Activated CD8-positive, alpha-beta T cell treated with anti-CD3 and anti-CD28 coated beads for 36 hours (primary cell): ENCODE measurements at regions of chr15 and their contacts with region 1.

Region 1: GRCh38 chr15:101014921-101015841 is 96.0 kb downstream of the LRRK1 start:
- DNase-seq: peak; percentile 79
- ATAC-seq: peak; percentile 66
- H3K4me3 Mint-ChIP-seq: no peak overlapping the region
- H3K27ac Mint-ChIP-seq: no peak overlapping the region
- H3K4me1 Mint-ChIP-seq: no peaks in the 10 kb centered on the region
- H3K27me3 Mint-ChIP-seq: peaks cover 2% of the 10 kb centered on the region
- CTCF ChIP-seq: peak; percentile 94

Region 2: GRCh38 chr15:101088788-101089583 is 73.8 kb after region 1 on chr15:
- CTCF ChIA-PET with region 1: interaction called, 16 read pairs
- POLR2A ChIA-PET with region 1: no interaction called
- intact Hi-C with region 1: no loop called
- DNase-seq: peak; percentile 83
- ATAC-seq: peak; percentile 97
- H3K4me3 Mint-ChIP-seq: no peak overlapping the region
- H3K27ac Mint-ChIP-seq: no peak overlapping the region
- H3K4me1 Mint-ChIP-seq: peaks cover 8% of the 10 kb centered on the region
- H3K27me3 Mint-ChIP-seq: no peaks in the 10 kb centered on the region
- CTCF ChIP-seq: peak; percentile 99

Region 3: DNA sequence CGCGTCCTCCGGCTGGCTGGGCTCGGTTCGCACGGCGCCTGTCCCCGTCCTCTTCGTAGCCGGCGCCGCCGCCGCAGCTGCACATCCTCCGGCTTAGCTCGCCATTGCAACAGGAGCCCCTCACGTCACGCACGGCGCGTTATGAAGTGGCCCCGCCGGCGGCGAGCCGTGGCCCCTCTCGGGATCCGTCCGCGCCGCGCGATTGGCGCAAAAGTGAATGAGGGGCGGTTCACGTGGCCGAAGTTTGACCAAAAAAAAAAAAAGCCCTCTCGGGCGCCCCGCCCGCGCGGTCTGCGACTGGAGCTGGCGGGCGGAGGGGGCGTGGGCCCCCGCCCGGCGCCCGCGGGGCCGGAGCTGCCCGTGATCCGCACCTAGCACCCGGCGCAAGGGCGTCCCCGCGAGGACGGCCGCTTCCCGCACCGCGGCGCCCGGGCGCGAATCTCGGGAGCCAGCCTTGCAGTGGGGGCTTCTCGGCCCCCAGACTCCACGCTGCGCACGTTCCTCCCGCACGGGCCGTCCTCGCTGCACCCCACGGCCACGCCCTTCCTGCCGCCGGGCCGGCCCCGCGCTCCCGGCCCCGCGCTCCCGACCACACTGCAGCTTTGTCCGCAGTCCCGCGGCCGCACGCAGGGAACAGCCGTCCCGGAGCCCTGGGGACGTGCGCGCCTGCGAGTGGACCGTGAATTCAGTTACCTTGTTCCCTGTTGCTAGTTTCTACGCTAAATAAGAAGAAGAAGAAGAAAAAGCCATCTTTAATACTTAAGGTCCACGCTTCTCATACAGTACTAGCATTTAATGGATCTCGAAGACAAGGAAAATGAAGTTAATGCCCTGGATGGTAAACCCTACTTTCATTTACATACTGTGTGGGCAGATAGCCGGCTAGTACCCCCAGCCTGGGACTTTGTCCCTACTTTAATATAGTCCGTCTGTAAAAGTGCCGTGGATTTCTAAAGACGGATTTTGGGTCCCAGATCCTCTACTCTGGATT is 236.9 kb after region 1 on chr15 and contains the start of gene CHSY1:
- CTCF ChIA-PET with region 1: interaction called, 85 read pairs
- POLR2A ChIA-PET with region 1: no interaction called
- intact Hi-C with region 1: loop called (anchors 2 kb)
- DNase-seq: peak; percentile 91
- ATAC-seq: peak; percentile 75
- H3K4me3 Mint-ChIP-seq: peak within 1 kb of the TSS; percentile 85
- H3K27ac Mint-ChIP-seq: peak within 1 kb of the TSS; percentile 87
- H3K4me1 Mint-ChIP-seq: peaks cover 59% of the 10 kb centered on the region
- H3K27me3 Mint-ChIP-seq: no peaks in the 10 kb centered on the region
- CTCF ChIP-seq: no peak
- total RNA-seq, gene CHSY1: 57.9 to 58.3 TPM

Region 4: GRCh38 chr15:101269479-101270223 is 254.5 kb after region 1 on chr15:
- CTCF ChIA-PET with region 1: interaction called, 16 read pairs
- POLR2A ChIA-PET with region 1: no interaction called
- intact Hi-C with region 1: no loop called
- DNase-seq: no peak
- ATAC-seq: no peak
- H3K4me3 Mint-ChIP-seq: no peak overlapping the region
- H3K27ac Mint-ChIP-seq: peak overlapping the region; percentile 32
- H3K4me1 Mint-ChIP-seq: peaks cover under 1% of the 10 kb centered on the region
- H3K27me3 Mint-ChIP-seq: no peaks in the 10 kb centered on the region
- CTCF ChIP-seq: no peak

Region 5: GRCh38 chr15:101580431-101580830 is 565.2 kb after region 1 on chr15:
- CTCF ChIA-PET with region 1: no interaction called
- POLR2A ChIA-PET with region 1: no interaction called
- intact Hi-C with region 1: no loop called
- DNase-seq: no peak
- ATAC-seq: no peak
- H3K4me3 Mint-ChIP-seq: no peak overlapping the region
- H3K27ac Mint-ChIP-seq: no peak overlapping the region
- H3K4me1 Mint-ChIP-seq: no peaks in the 10 kb centered on the region
- H3K27me3 Mint-ChIP-seq: peaks cover 24% of the 10 kb centered on the region
- CTCF ChIP-seq: no peak

Region 6: DNA sequence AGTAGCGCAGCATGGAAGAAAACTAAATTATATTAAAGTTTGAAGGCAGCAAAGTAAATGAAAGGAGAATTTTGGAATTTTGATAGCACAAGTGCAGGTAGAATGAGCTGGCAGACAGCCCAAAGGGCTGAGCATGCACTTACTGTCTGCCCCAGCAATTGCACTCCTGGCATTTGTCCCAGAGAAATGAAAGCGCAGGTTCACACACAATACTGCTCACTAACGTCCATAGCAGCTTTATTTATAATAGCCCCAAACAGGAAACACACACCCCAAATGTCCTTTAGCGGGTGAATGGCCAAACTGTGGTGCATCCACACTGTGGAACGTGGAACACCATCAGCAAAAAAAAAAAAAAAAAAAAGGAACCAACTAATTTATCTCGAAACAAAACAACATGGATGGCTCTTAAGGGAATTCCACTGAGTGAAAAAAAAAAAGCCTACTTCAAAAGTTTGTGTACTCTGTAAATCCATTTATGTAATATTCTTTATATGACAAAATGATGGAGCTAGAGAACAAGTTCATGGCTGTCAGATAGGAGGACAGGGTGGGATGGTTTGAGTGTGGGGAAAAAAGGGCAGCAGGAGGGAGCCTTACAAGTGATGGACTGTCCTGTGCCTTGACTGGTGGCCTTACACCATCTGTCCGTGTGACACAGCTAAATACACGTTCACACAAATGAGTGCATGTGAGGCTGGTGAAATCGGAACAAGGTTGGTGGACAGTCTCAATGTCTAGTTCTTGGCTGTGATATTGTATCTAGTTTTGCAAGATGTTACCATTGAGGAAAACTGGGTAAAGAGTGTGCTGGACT is 643.0 kb after region 1 on chr15:
- CTCF ChIA-PET with region 1: no interaction called
- POLR2A ChIA-PET with region 1: no interaction called
- intact Hi-C with region 1: no loop called
- DNase-seq: no peak
- ATAC-seq: no peak
- H3K4me3 Mint-ChIP-seq: no peak overlapping the region
- H3K27ac Mint-ChIP-seq: no peak overlapping the region
- H3K4me1 Mint-ChIP-seq: peaks cover 14% of the 10 kb centered on the region
- H3K27me3 Mint-ChIP-seq: no peaks in the 10 kb centered on the region
- CTCF ChIP-seq: no peak